ENCODE measurements at regions of chr20 and their contacts with region 1.

Region 1: GRCh38 chr20:38407321-38407720 is 27.8 kb downstream of the SNHG17 start:
- DNase-seq: no peak
- ATAC-seq: no peak
- H3K4me3 Mint-ChIP-seq: no peak overlapping the region
- H3K27ac Mint-ChIP-seq: no peak overlapping the region
- H3K4me1 Mint-ChIP-seq: peaks cover 2% of the 10 kb centered on the region; the same call in 1 of the 2 replicates
- H3K27me3 Mint-ChIP-seq: no peaks in the 10 kb centered on the region
- CTCF ChIP-seq: no peak

Region 2: DNA sequence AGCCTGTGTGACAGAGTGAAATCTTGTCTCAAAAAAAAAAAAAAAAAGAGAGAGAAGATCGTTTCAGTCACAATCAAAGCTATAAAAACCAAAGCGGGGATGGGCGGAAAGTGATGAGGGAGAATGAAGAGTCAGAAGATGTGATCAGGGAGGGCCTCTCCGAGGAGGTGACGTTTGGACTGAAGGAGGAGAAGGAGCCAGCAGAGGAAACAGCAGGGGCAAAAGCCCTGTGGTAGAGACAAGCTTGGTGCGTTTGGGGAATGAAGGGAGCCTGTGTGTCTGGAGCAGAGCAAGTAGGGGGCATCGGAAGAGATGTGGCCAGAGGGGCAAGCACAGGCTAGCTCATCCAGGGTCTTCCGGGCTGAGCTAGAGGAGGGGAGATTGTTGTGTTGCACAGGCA is 75.5 kb before region 1 on chr20:
- CTCF ChIA-PET with region 1: interaction called, 208 read pairs
- POLR2A ChIA-PET with region 1: no interaction called
- DNase-seq: no peak
- ATAC-seq: no peak
- H3K4me3 Mint-ChIP-seq: no peak overlapping the region
- H3K27ac Mint-ChIP-seq: no peak overlapping the region
- H3K4me1 Mint-ChIP-seq: no peaks in the 10 kb centered on the region
- H3K27me3 Mint-ChIP-seq: no peaks in the 10 kb centered on the region
- CTCF ChIP-seq: no peak

Region 3: GRCh38 chr20:38387953-38388352 is 19.4 kb before region 1 on chr20:
- CTCF ChIA-PET with region 1: interaction called, 20 read pairs
- POLR2A ChIA-PET with region 1: no interaction called
- DNase-seq: no peak
- ATAC-seq: no peak; the same call in 1 of the 2 replicates
- H3K4me3 Mint-ChIP-seq: no peak overlapping the region
- H3K27ac Mint-ChIP-seq: no peak overlapping the region
- H3K4me1 Mint-ChIP-seq: peaks cover 8% of the 10 kb centered on the region
- H3K27me3 Mint-ChIP-seq: no peaks in the 10 kb centered on the region
- CTCF ChIP-seq: no peak

Region 4: GRCh38 chr20:38485041-38485440 is 77.7 kb after region 1 on chr20:
- CTCF ChIA-PET with region 1: no interaction called
- POLR2A ChIA-PET with region 1: no interaction called
- DNase-seq: no peak
- ATAC-seq: no peak
- H3K4me3 Mint-ChIP-seq: no peak overlapping the region
- H3K27ac Mint-ChIP-seq: no peak overlapping the region
- H3K4me1 Mint-ChIP-seq: no peaks in the 10 kb centered on the region
- H3K27me3 Mint-ChIP-seq: no peaks in the 10 kb centered on the region
- CTCF ChIP-seq: no peak